ENCODE measurements at regions of chr1 and their contacts with region 1.

Region 1: GRCh38 chr1:30111431-30111830 is 612.0 kb downstream of the MATN1 start:
- DNase-seq: peak; percentile 36 to 50
- ATAC-seq: peak; percentile 52 to 87 (median 80)
- H3K4me3 ChIP-seq: no peak overlapping the region
- H3K27ac ChIP-seq: no peak overlapping the region
- H3K4me1 ChIP-seq: peaks cover 0 to 5% (median 0%) of the 10 kb centered on the region in 9 donors
- H3K27me3 ChIP-seq: peaks cover 0 to 79% (median 68%) of the 10 kb centered on the region in 7 donors
- CTCF ChIP-seq: peak; percentile 22 to 77 (median 65)

Region 2: GRCh38 chr1:29235955-29236684 is 875.3 kb before region 1 on chr1 and contains the start of gene PTPRU:
- intact Hi-C with region 1: loop called in 8 of 10 experiments (anchors 2 to 10 kb)
- DNase-seq: peak; percentile 72 to 83
- ATAC-seq: peak; percentile 69 to 89 (median 80)
- H3K4me3 ChIP-seq: peak within 1 kb of the TSS; percentile 52 to 82 (median 66)
- H3K27ac ChIP-seq: peak within 1 kb of the TSS in 8 of 10 donors; percentile 13 to 73 (median 54)
- H3K4me1 ChIP-seq: peaks cover 5 to 30% (median 21%) of the 10 kb centered on the region in 9 donors
- H3K27me3 ChIP-seq: peaks cover 0 to 51% (median 0%) of the 10 kb centered on the region in 7 donors
- CTCF ChIP-seq: peak; percentile 63 to 99 (median 82)
- total RNA-seq, gene PTPRU: 8.6 to 29.8 (median 14.5) TPM

Region 3: GRCh38 chr1:29245876-29246275 is 865.6 kb before region 1 on chr1:
- intact Hi-C with region 1: loop called in 1 of 10 experiments (anchors 10 kb)
- DNase-seq: no peak
- ATAC-seq: peak in 2 of 8 donors; percentile 50 to 54
- H3K4me3 ChIP-seq: no peak overlapping the region
- H3K27ac ChIP-seq: no peak overlapping the region
- H3K4me1 ChIP-seq: peaks cover 0 to 4% (median 0%) of the 10 kb centered on the region in 9 donors
- H3K27me3 ChIP-seq: no peaks in the 10 kb centered on the region
- CTCF ChIP-seq: peak in 8 of 9 donors; percentile 6 to 47 (median 36)

Region 4: GRCh38 chr1:29502911-29503840 is 608.3 kb before region 1 on chr1:
- intact Hi-C with region 1: loop called in 1 of 10 experiments (anchors 10 kb)
- DNase-seq: no peak
- ATAC-seq: no peak
- H3K4me3 ChIP-seq: no peak overlapping the region
- H3K27ac ChIP-seq: no peak overlapping the region
- H3K4me1 ChIP-seq: peaks cover 0 to 6% (median 0%) of the 10 kb centered on the region in 9 donors
- H3K27me3 ChIP-seq: peaks cover 0 to 61% (median 34%) of the 10 kb centered on the region in 7 donors
- CTCF ChIP-seq: no peak

Region 5: GRCh38 chr1:29793101-29793546 is 318.3 kb before region 1 on chr1:
- intact Hi-C with region 1: loop called in 5 of 10 experiments (anchors 1 to 10 kb)
- DNase-seq: peak; percentile 71 to 78
- ATAC-seq: peak; percentile 55 to 87 (median 79)
- H3K4me3 ChIP-seq: no peak overlapping the region
- H3K27ac ChIP-seq: no peak overlapping the region
- H3K4me1 ChIP-seq: no peaks in the 10 kb centered on the region
- H3K27me3 ChIP-seq: peaks cover 0 to 16% (median 0%) of the 10 kb centered on the region in 7 donors
- CTCF ChIP-seq: peak; percentile 63 to 85 (median 81)

Region 6: DNA sequence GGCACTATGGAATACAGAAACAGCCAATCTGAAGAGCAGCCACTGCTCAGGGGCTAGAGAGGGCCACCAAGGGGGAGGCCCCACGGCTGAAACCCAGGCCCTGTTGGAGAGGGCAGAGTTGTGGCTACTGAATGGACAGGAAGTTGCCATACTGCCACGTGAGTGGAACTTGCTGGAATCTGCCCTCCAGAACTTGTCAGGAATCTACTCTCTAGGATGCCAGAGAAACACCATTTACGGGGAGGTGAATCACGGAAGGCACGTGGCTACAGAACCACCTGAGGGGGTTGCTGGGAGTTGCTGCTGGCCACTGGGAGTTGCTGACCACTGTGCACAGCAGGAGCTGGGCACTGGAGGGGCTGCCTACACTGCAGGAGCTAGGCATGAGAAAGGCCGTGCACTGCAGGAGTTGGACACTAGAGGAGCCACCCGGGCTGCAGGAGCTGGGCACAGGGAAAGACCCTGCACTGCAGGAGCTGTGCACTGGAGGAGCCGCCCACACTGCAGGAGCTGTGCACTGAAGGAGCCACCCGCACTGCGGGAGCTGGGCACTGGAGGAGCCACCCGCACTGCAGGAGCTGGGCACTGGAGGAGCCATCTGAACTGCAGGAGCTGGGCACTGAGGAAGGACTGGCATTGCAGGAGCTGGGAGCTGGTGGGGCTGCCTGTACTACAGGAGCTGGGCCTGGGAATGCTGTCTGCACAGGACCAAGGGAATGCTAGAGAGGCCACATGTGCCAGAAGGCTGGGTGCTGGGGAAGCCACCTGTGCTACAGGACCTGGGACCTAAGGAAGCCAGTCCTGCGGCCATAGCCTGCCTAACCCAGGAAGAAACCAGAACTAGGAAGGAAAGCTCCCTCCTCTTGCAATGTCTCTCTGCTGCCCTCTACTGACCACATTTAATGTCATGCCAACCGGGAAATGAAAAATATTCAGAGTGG is 268.5 kb after region 1 on chr1:
- intact Hi-C with region 1: loop called in 1 of 10 experiments (anchors 10 kb)
- DNase-seq: peak in 1 of 2 donors; percentile 69
- ATAC-seq: peak; percentile 59 to 80 (median 68)
- H3K4me3 ChIP-seq: no peak overlapping the region
- H3K27ac ChIP-seq: no peak overlapping the region
- H3K4me1 ChIP-seq: peaks cover 0 to 9% (median 3%) of the 10 kb centered on the region in 9 donors
- H3K27me3 ChIP-seq: peaks cover 0 to 42% (median 34%) of the 10 kb centered on the region in 7 donors
- CTCF ChIP-seq: peak; percentile 76 to 89 (median 85)